ENCODE measurements at regions of chr19 and their contacts with region 1.

Region 1: GRCh38 chr19:45770192-45771101 is 1.4 kb upstream of the SIX5 start:
- DNase-seq: peak; percentile 97
- ATAC-seq: peak; percentile 90
- H3K4me3 ChIP-seq: peak overlapping the region; percentile 0 to 18
- H3K27ac ChIP-seq: peak overlapping the region in 1 of 2 donors; percentile 56
- H3K4me1 ChIP-seq: no peaks in the 10 kb centered on the region
- H3K27me3 ChIP-seq: no peaks in the 10 kb centered on the region

Region 2: DNA sequence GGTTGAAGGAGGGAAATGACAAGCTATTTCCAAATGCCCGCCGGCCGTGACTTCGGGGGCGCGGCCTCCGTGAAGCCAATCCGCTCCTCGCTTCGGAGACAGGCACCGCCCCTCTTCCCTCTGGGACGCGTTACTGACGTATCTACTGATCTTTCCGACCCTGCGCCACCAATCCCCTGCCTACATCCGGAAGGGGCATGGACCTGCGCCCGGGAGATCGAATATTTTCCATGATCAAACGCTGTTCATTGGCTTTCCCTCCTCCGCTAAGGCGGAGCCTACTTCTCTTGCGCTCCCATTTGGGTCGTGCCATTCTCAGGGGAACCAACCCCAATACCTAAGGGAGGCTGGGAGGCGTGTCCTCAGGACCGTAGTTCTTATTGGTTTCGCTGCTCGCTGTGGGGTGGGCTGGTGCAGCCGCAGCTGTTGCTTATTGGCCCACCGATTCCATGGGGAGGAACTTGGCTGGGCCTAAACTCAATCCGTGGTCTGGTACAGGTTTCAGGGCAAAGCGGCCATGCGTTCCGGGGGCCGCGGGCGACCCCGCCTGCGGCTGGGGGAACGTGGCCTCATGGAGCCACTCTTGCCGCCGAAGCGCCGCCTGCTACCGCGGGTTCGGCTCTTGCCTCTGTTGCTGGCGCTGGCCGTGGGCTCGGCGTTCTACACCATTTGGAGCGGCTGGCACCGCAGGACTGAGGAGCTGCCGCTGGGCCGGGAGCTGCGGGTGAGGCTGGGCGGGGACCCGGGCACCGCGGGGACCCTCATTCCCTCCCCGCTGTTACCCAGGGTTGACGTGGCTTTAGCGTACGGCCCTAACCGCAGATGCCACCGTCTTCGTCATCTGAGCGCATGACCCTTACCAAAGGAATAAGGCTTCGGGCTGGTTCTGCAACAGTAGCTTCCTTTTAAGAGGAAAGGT is 78.0 kb before region 1 on chr19 and contains the start of gene QPCTL:
- intact Hi-C with region 1: loop called in 1 of 2 experiments (anchors 5 kb)
- DNase-seq: peak; percentile 98 to 99
- ATAC-seq: peak; percentile 96
- H3K4me3 ChIP-seq: peak within 1 kb of the TSS; percentile 37 to 64
- H3K27ac ChIP-seq: peak within 1 kb of the TSS in 1 of 2 donors; percentile 79
- H3K4me1 ChIP-seq: no peaks in the 10 kb centered on the region
- H3K27me3 ChIP-seq: no peaks in the 10 kb centered on the region
- total RNA-seq, gene QPCTL: 5.3 to 5.4 TPM

Region 3: DNA sequence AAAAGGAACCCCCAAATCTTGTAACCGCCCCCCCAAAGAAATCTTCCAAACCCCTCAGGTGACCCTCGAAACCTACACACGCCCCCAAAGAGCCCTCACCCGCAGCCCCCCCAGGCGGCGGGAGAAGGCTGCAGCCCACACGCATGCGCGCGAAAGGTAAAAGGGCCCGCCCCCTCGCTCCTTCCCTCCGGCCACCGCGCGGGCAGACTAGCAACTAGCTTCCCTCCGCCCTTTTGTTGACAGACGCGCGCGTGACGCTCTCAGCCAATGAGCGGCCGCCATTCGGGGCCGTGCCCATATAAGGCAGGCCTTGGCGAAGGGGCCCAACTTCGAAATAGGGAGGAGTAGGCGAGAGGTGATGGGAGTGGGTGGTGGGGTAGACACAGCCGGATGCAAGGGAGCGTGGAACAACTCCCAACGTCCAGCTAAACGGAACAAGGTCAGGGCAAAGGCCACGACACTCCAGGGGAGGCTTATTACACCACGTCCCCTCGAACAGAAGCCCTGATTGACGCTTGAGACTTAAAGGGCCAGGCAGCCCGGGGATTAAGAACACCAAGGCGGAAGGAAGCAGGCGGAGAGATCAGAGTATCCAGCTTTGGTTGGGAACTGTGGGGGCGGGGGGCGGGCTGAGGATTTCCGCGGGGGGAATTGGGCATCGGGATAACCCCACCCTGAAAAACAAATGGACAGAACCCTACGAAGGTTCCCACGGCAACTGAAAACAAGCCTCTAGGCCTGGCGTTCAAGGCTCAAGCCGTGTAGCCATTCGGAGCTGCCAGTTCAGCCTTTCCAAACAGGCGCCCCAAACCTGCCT is 53.1 kb before region 1 on chr19:
- intact Hi-C with region 1: loop called in 1 of 2 experiments (anchors 5 kb)
- DNase-seq: peak; percentile 99
- ATAC-seq: peak; percentile 99
- H3K4me3 ChIP-seq: peak overlapping the region; percentile 35 to 64
- H3K27ac ChIP-seq: peak overlapping the region in 1 of 2 donors; percentile 77
- H3K4me1 ChIP-seq: no peaks in the 10 kb centered on the region
- H3K27me3 ChIP-seq: no peaks in the 10 kb centered on the region

Region 4: GRCh38 chr19:45730389-45731288 is 39.8 kb before region 1 on chr19 and contains the start of gene FBXO46:
- intact Hi-C with region 1: loop called (anchors 5 kb)
- DNase-seq: peak; percentile 98
- ATAC-seq: peak; percentile 99
- H3K4me3 ChIP-seq: peak within 1 kb of the TSS; percentile 74 to 83
- H3K27ac ChIP-seq: no peak within 1 kb of the TSS
- H3K4me1 ChIP-seq: no peaks in the 10 kb centered on the region
- H3K27me3 ChIP-seq: no peaks in the 10 kb centered on the region
- total RNA-seq, gene FBXO46: 12.7 to 15.5 TPM

Region 5: DNA sequence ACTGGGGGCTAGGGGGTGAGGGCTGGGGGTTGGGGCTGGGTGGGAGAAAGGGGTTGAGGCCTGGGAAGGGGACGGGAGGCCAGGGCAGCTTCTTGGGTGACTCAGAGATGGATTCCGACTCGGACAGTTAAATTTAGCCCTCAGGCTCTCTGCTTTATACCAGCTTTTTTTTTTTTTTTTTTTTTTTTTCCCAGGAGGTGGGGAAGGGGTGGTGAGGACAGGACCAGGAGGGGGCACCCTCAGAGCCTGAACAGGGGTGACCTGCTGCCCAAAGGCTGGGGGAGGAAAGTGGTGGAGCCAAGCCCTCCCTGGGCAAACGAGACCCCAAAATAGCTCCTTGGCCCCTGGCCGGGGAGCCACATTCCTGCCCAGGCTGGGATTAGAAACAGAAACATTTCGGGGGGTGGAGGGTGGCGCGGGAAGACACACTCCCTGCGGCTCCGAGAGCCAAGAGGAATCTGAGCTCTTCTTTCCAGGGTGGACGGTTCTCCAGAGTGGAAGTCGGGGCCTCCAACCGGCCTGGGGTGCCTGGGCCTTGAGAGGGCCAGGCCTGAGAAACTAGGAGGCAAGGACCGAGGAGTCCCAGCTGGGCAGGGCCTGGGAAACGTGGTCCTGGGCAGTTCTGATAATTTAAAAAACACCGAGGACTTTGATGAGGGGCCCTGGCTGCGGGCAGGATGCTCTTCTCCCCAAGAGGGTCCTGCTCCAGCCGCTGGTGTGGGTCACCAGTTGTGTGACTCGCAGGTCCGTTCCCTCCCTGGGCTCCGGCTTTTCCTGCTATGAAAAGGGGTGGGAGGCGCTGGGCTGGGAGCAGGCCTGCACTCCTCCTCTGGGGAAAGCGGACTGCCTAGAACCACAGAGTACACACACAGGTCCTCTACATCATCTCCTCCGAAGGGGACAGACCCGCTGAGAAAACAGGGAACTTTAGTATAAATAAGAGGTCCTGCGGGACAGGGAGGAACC is 12.7 kb after region 1 on chr19:
- intact Hi-C with region 1: loop called in 1 of 2 experiments (anchors 2 kb)
- DNase-seq: peak; percentile 85 to 92
- ATAC-seq: peak; percentile 73
- H3K4me3 ChIP-seq: peak overlapping the region in 1 of 2 donors; percentile 62
- H3K27ac ChIP-seq: peak overlapping the region; percentile 91 to 93
- H3K4me1 ChIP-seq: no peaks in the 10 kb centered on the region
- H3K27me3 ChIP-seq: no peaks in the 10 kb centered on the region

Region 6: GRCh38 chr19:45798995-45799517 is 28.6 kb after region 1 on chr19:
- intact Hi-C with region 1: loop called (anchors 1 to 2 kb)
- DNase-seq: peak; percentile 76 to 80
- ATAC-seq: peak; percentile 91
- H3K4me3 ChIP-seq: no peak overlapping the region
- H3K27ac ChIP-seq: no peak overlapping the region
- H3K4me1 ChIP-seq: no peaks in the 10 kb centered on the region
- H3K27me3 ChIP-seq: no peaks in the 10 kb centered on the region

Region 7: DNA sequence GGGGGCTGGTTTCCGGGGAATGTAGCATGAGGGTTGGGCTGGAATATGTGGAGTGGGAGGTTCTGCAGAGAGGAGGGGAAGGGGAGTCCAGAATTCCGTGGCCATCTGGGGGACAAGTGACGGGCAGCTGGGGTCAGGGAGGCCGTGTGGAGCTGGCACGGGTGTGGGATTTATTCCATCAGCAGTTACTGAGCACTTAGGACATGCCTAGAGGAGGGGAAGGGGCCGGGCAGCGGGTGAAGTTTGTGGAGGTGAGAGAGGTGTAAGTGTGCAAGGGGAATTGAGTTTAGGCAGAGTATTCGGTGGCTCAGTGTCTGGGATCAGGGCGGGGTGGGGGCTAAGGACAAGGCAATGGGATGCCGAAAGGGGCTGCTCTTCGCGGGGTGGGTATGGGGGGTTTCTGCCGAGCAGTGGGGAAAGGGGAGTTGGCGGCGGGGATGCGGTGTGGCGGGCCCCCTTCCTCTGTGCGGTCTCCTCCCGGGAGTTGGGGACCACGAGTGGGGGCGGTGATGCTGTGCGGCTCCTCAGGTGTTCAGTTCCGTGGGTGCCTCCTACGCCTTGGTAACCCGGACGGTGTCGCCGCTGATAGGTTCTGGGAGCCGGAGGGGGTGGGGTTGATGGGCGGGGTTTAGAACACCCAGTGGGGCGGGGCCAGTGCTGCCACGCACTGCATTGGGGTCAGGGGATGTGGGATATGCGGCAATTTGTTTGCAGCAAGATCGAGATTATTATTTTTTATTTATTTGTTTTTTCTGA is 230.2 kb after region 1 on chr19:
- intact Hi-C with region 1: no loop called
- DNase-seq: peak in 1 of 2 donors; percentile 52
- ATAC-seq: peak; percentile 46
- H3K4me3 ChIP-seq: no peak overlapping the region
- H3K27ac ChIP-seq: no peak overlapping the region
- H3K4me1 ChIP-seq: no peaks in the 10 kb centered on the region
- H3K27me3 ChIP-seq: no peaks in the 10 kb centered on the region